Left cardiac atrium (tissue), 4 donors: ENCODE measurements at regions of chr9 and their contacts with region 1.

Region 1: GRCh38 chr9:105414947-105415661 is 32.7 kb upstream of the FSD1L start:
- DNase-seq: peak; percentile 45
- ATAC-seq: peak; percentile 76 to 78

Region 2: DNA sequence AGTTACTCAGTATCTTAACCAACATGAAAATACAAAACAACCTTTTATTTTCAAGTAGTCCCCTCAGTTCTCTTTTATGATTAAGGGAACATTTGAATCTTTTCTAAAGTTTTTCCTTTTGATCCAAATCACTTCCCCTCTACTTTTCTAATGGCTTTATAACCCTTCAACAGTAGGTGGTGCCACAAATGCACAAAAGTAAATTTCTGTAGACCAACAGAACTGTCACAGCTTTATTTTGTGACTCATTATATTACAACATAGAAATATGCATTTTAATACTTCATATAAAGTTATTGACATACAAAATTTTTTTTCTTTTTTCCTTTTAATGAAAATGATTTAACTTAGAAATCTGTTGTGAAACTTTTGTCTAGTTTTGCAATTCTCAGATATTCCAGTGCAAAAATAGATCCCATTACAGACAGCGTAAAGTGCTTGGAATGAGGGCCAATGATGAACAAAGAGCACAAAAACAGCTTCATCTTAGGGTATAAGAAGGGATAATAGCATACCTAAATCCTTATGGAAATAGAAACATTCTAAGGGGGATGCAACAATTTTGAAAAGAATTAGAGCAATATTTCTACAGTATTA is 634.2 kb before region 1 on chr9:
- intact Hi-C with region 1: loop called in 1 of 2 experiments (anchors 10 kb)
- DNase-seq: no peak
- ATAC-seq: peak in 1 of 2 donors; percentile 32

Region 3: GRCh38 chr9:104863180-104863883 is 551.8 kb before region 1 on chr9:
- intact Hi-C with region 1: loop called (anchors 5 kb)
- DNase-seq: no peak
- ATAC-seq: peak; percentile 72 to 74

Region 4: DNA sequence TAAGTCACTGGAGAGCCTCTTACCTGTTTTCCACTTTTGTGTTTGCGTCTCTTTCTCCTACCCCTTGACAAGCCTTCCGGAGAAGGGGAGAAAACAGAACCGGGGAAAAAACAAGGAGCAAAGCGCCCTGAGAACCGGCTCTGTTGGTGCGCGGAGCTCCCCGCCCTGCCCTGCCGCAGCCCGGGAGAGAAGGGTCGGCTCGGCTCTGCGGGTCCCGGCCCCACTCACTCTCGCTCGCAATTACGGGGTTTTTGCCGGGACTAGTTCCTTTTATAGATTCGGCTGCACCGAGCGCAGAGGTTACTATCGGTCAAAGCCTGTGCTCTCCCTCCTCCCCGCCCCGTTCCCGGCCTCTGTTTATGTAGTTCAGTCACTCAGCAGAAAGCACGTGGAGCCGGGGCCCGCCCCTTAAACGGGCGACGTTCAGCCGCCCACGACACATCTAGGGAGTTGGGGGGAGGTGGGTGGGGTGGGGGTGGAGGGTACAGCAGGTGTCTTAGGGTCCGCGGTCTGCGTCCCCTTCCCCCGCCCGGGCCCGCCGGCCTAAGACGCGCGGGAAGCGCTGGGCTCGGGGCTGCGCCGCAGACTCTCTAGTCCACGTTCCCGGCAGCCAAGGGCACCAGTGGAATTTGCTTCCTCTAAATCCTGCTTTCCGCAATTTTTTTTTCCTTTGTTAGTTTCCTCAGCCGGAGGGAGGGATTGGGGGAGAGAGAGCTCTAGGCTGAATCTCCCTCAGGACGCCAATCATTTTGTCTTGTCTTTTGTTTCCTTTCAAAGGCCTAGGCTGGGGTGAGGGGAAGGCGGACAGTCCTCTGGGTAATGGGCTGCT is 487.0 kb before region 1 on chr9 and contains the start of gene ABCA1:
- intact Hi-C with region 1: loop called (anchors 10 kb)
- DNase-seq: peak; percentile 93
- ATAC-seq: peak; percentile 87 to 89
- total RNA-seq, gene ABCA1: 8.3 to 19.8 TPM

Region 5: DNA sequence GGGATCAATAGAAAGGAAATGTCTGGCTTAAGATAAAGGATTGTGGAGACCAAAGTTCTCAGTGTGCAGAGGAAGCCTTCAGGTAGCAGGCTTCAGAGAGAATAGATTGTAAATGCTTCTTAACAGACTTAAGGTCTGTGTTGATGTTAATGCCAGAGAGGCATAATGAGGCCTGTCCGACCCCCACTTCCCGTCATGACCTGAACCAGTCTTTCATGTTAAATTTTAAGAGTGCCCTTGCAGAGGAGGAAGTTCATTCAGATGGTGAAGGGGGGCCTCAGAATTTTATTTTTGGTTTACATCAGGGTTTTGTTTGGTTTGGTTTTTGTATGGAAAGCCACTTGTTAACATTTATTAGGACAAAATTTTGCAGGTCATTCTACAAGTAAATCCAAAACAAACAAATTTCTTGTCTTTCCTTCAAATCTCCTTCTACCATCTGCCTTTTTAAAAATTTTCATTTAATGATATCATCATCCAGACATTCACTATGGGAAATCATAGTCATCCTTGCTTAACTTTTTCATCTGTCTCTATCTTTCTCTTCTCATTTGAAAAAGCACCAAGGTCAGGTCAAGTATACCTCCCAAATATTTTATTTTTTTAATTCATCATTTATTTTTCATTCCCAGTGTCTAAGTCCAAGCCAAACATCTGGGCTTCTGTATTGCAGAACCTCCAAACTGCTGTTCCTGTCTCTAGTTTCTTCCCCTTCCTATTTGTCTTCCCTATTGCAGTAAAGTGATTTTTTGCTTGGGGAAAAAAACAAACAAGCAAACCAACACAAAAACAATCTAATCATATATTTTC is 480.2 kb before region 1 on chr9:
- intact Hi-C with region 1: loop called in 1 of 2 experiments (anchors 10 kb)
- DNase-seq: no peak
- ATAC-seq: peak in 1 of 2 donors; percentile 34

Region 6: DNA sequence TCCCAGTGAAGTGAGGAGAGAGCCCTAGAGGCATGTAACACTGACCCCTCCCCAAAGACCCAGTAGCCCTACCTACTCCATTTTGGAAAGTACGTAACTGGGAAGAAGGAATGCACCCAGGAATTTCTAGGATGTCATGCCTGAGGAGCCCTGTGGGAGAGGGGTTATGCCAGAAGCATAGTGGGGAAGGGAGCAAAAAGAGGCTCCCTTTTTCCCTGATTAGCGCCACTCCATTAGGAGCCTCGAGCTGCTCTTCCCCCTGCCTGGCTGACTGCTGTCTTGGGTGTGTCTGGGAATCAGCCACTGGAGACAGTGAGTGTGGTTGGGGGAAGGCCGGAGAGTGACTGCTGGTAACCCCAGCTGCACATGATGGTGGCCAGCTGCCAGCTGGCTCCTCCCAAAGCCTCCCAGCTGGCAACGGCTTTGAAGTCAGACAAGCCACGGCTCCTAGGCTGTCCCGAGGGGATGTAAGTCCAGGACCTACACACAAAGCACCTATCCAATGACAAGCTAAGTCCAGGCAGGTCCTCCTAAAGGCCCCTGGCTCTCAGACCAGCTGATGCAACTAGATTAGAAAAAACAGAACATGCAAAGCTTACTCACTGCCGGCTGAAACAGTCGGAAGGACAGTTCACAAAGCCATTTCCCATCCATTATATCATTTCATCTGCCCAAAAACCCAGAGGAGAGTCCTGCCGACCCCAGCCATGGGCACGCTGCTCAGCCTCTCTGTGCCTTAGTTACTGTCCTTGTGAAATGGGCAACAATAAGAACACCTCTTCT is 350.6 kb before region 1 on chr9:
- intact Hi-C with region 1: loop called in 1 of 2 experiments (anchors 10 kb)
- DNase-seq: peak; percentile 92
- ATAC-seq: peak; percentile 96 to 97

Region 7: GRCh38 chr9:105157130-105157583 is 257.9 kb before region 1 on chr9:
- intact Hi-C with region 1: loop called (anchors 1 to 5 kb)
- DNase-seq: peak; percentile 47
- ATAC-seq: peak; percentile 86 to 89

Region 8: DNA sequence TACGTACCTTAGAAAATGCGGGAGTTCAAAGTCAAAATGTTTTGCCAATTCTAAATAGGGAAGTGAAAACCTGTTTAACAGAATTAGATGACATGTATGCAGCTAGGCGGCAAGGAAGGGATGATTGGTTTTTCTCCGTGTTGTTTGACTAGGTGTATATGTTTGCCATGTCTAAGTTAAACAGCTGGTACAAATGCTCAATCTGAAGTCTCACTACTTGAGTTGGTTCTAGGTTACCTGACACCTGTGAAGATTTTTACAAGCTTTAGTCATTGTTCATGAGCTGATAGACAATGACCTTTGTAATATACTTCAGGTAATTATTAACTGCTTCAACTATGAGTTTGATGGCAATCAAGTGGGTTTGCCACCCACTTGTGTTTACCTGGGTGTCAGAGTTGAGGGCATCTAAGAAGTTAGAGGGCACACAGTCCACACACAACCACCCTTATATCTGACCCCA is 96.3 kb before region 1 on chr9:
- intact Hi-C with region 1: no loop called
- DNase-seq: no peak
- ATAC-seq: no peak

Region 9: GRCh38 chr9:106233085-106233484 is 818.0 kb after region 1 on chr9:
- intact Hi-C with region 1: no loop called
- DNase-seq: no peak
- ATAC-seq: no peak